ENCODE measurements at regions of chr22 and their contacts with region 1.

Region 1: GRCh38 chr22:17213976-17214375 is 5.3 kb downstream of the ADA2 start:
- DNase-seq: peak in 1 of 2 experiments; percentile 72
- H3K4me3 ChIP-seq: no peak overlapping the region
- H3K27ac ChIP-seq: no peak overlapping the region
- H3K4me1 ChIP-seq: peaks cover 5 to 11% (median 8%) of the 10 kb centered on the region in 4 experiments; a peak in 6 of 7 replicates
- H3K27me3 ChIP-seq: no peaks in the 10 kb centered on the region
- CTCF ChIP-seq: peak; percentile 67 to 81 (median 77)
- EP300 ChIP-seq: no peak
- POLR2A ChIP-seq: no peak
- RAD21 ChIP-seq: peak; percentile 56 to 67

Region 2: DNA sequence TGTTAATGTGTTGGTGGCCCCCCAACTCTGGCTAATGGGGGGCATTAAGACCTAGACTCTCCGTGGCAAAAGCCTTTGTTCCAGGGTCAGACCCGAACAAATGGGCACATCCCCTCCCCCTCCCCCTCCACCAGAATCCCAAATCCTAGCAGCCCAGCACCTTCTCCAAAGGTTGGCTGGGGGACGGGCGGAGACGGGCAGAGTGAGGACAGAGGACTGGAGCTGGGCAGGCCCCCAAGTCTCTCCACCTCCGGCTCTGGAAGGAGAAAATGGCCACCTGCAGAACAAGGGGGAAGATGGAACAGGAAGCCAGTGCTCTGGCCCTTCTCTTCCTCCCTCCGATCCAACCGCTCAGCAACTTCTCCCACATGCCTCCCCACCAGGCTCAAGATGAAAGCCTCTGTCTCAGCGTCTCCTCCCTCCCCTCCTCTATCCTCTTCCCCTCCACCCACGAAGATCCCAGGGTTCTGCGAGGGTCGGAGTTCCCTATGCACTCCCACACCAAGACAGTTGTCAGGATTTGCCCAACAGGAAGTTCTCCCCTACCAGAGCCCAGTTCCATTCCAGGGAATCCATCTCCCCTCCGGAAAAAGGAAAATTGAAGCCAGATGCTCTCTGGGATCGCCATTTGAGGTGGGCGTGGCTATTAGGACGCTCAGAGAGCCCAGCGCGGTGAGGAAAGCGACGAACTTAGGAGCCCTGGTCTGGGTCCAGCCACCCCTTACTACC is 14.8 kb before region 1 on chr22:
- CTCF ChIA-PET with region 1: interaction called, 22 read pairs
- POLR2A ChIA-PET with region 1: interaction called, 11 read pairs
- DNase-seq: peak; percentile 50 to 77
- H3K4me3 ChIP-seq: peak overlapping the region; percentile 47 to 65 (median 56); a peak in 7 of 8 replicates
- H3K27ac ChIP-seq: peak overlapping the region; percentile 99
- H3K4me1 ChIP-seq: peaks cover 16 to 31% (median 19%) of the 10 kb centered on the region in 4 experiments
- H3K27me3 ChIP-seq: no peaks in the 10 kb centered on the region
- CTCF ChIP-seq: no peak
- EP300 ChIP-seq: peak in 1 of 2 experiments; percentile 78; a peak in 1 of 3 replicates
- POLR2A ChIP-seq: peak; percentile 25 to 97
- RAD21 ChIP-seq: no peak

Region 3: DNA sequence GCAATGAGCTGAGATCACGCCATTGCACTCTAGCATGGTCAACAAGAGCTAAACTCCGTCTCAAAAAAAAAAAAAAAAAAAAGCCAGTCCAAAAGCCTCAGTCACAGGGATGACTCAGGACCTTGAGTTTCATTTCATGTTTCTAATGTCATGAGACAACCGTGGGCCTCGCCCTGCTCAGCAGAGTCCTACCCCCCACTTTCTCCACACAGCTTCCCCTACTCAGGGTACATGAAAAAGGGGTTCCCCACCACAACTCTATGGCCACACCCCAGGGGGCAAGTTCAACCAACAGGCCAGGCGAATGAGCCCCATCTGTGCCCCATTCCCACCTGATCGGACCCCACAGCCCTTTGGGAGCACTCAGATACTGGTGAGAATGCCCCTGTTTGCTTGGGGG is 29.5 kb after region 1 on chr22:
- CTCF ChIA-PET with region 1: interaction called, 16 read pairs
- POLR2A ChIA-PET with region 1: interaction called, 4 read pairs
- DNase-seq: no peak
- H3K4me3 ChIP-seq: no peak overlapping the region
- H3K27ac ChIP-seq: no peak overlapping the region
- H3K4me1 ChIP-seq: peaks cover 0 to 3% (median 0%) of the 10 kb centered on the region in 4 experiments; a peak in 2 of 7 replicates
- H3K27me3 ChIP-seq: no peaks in the 10 kb centered on the region
- CTCF ChIP-seq: no peak
- EP300 ChIP-seq: no peak
- POLR2A ChIP-seq: no peak
- RAD21 ChIP-seq: no peak